GM13976 (cell line): ENCODE measurements at regions of chr13 and their contacts with region 1.

Region 1: GRCh38 chr13:78121459-78122348 is 203.1 kb upstream of the EDNRB start:
- DNase-seq: peak; percentile 35
- CTCF ChIP-seq: peak; percentile 80

Region 2: DNA sequence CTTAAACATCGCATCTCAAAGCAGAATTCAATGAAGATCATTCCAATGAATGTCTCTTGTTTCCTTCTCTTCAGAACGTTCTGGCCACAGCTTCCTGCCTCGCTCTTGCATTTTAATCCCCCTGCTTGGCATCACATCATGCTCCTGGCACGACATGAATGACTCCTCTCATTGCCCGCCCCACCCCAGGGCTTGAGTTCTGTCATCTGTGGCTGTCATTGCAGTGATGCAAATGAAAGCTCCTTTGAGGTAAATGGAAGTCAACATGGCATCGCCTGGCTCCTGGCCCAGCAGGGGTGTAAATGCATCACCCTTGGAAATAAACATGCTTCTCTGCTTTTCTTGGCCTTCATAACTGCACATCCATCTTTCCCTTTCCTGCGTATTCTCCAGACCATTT is 537.6 kb before region 1 on chr13:
- in situ Hi-C with region 1: loop called (anchors 25 kb)
- DNase-seq: no peak
- CTCF ChIP-seq: no peak

Region 3: DNA sequence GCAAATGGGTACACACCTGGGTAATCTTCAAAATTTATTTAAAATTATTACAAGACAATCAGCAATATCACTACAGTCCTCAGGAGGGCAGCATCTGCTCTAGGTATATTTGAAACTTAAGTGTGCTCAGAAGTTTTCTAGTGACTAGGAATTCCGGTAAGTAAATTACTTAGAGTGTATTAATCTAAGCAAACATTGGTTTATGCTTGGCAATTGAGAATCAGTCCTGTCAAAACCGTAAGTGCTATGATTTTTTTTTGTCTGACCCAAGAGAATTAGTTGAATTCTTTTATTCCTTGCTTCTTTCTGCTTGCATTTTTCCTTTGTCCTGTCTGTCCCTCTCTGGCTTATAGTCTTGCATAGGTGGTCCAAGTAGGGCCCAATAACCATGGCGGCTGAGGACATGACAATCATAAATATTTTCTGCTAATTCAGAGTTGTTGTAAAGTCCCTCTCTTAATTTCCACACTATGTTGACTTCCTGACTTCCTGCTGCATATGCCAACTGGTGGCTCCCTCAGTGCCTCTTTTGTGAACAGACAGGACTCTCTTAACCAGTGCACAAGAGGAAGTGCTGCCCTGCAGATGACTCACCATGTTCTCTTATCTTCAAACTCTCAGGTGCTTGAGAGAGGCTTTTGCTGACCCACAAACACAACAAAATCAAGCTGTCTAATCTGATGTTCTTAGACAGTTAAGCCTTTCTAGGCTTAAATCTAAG is 342.0 kb before region 1 on chr13:
- in situ Hi-C with region 1: loop called (anchors 10 kb)
- DNase-seq: peak; percentile 45
- CTCF ChIP-seq: peak; percentile 48

Region 4: DNA sequence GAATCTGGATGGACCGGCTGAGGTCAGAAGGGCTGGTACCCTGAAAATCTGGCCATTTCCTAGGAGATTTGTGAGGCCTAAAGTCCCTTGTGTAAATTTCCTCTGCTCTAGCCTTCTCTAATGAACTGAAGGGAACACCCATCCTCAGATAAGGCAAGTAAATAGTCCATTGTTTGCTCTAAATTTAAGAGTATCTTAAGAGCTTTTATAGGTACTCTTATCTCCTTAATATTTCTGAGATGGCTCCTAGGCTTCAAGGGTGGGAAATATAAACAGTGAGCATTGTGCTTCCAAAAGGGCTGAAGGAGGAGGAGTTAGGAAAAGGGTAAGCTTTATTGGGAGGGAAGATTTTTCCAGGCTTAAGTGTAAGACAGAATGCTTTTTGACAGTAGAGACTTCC is 54.4 kb before region 1 on chr13:
- in situ Hi-C with region 1: no loop called
- DNase-seq: no peak
- CTCF ChIP-seq: no peak

Region 5: DNA sequence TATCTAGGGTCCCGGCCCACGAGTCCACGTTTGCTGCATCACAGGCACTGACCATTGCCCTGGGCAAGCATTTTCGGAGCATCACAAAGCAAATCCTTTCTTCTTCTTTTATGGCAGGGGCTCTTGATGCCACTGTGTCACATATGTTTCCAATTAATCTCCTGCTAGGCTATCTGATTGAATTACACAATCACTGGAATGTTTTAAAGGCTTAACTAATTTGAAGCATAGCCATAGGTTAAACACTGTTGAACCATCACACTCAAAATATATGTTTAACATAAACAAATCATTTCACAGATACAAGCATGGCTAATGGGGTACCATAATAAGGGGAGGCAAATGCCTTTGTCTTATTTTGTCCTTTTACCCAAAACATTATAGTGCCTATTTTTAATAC is 143.4 kb after region 1 on chr13:
- in situ Hi-C with region 1: no loop called
- DNase-seq: no peak
- CTCF ChIP-seq: no peak